IMR-90 (cell line): ENCODE measurements at regions of chr7 and their contacts with region 1.

Region 1: DNA sequence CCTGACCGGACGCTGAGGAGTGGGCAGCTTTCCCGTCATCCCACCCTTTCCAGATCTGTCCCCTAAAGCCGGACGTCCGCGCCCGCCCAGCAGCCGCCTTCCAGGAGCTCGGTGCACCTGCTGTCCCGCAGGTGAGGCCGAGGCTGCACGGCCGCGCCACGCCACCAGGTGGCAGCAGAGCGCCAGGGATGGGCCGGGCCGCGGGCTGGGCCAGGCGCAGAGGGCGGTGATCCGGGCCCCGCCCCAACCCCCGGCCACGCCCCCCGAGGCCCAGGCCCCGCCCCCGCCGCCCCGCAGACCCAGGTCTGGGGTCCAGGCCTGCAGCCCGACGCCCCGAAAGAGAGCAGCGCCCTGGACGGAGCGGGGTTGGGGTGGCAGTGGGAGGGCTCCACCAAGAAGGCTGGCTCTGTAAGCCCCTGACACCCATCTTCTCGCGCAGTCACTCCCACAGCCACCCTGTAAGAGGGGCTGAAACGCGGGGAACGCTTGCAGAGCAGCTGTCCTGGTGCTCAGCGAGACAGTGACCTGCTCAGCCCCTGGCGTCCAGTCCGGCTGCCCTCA is 32.2 kb downstream of the FOXL3 start:
- DNase-seq: peak; percentile 3
- ATAC-seq: peak; percentile 99
- H3K4me3 ChIP-seq: no peak overlapping the region
- H3K27ac ChIP-seq: no peak overlapping the region
- H3K4me1 ChIP-seq: no peaks in the 10 kb centered on the region
- H3K27me3 ChIP-seq: peaks cover 49% of the 10 kb centered on the region
- CTCF ChIP-seq: peak; percentile 77
- POLR2A ChIP-seq: 0 out of 2 replicates have a peak, but pooled peaks have one; percentile 25
- RAD21 ChIP-seq: peak; percentile 91

Region 2: DNA sequence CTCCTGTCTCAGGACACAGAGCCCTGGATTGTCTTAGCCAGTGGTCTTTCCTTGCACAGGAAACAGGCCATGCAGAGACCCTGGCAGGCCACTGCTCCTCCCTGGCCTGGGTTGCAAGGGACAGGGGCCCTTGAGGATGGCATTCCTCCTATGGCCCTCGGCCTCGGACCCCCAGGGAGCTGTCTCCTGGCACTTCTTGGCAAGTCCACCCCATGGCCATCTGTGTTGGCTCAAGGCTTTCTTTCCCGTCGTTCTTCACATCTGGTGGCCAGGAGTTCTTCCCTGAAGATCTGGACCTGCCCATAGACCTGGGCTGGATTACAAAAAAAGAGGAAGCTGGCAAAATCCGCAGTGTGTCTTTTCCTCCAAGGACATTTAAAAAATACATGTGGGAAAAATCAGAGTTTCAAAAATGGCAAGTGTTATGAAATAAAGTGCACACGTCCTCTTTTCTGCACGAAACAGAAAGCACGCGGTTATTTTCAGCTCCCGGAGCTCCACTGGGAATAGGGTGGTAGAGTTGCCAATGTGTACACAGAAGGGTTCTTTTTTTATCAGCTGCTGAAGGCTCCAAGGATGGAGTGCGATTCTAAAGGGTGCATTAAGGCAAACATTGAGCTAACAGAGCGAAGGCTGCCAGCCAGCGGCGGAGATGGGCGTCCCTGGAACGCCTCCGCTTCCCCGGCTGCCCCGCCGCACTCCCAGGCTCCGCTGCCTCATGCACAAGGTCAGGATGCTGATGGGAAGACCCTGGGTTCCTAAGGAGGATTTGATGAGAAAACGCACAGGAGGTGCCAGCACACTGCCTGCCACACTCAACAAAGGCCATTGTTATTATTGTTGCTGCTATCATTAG is 192.6 kb before region 1 on chr7:
- CTCF ChIA-PET with region 1: no interaction called
- POLR2A ChIA-PET with region 1: no interaction called
- dilution Hi-C with region 1: no loop called
- in situ Hi-C with region 1: no loop called
- intact Hi-C with region 1: no loop called
- DNase-seq: no peak
- ATAC-seq: no peak; the same call in 1 of the 2 replicates
- H3K4me3 ChIP-seq: no peak overlapping the region
- H3K27ac ChIP-seq: no peak overlapping the region
- H3K4me1 ChIP-seq: peaks cover 7% of the 10 kb centered on the region; the same call in 1 of the 2 replicates
- H3K27me3 ChIP-seq: peaks cover 9% of the 10 kb centered on the region
- CTCF ChIP-seq: no peak
- POLR2A ChIP-seq: no peak
- RAD21 ChIP-seq: no peak

Region 3: GRCh38 chr7:455110-455928 is 133.1 kb after region 1 on chr7:
- CTCF ChIA-PET with region 1: no interaction called
- POLR2A ChIA-PET with region 1: no interaction called
- dilution Hi-C with region 1: no loop called
- in situ Hi-C with region 1: no loop called
- intact Hi-C with region 1: no loop called
- DNase-seq: no peak
- ATAC-seq: no peak
- H3K4me3 ChIP-seq: no peak overlapping the region
- H3K27ac ChIP-seq: no peak overlapping the region
- H3K4me1 ChIP-seq: peaks cover 10% of the 10 kb centered on the region
- H3K27me3 ChIP-seq: peaks cover 22% of the 10 kb centered on the region
- CTCF ChIP-seq: no peak
- POLR2A ChIP-seq: no peak
- RAD21 ChIP-seq: no peak

Region 4: GRCh38 chr7:636396-636795 is 314.2 kb after region 1 on chr7:
- CTCF ChIA-PET with region 1: no interaction called
- POLR2A ChIA-PET with region 1: no interaction called
- dilution Hi-C with region 1: no loop called
- in situ Hi-C with region 1: no loop called
- intact Hi-C with region 1: loop called (anchors 2 kb)
- DNase-seq: no peak
- ATAC-seq: peak; percentile 64
- H3K4me3 ChIP-seq: no peak overlapping the region
- H3K27ac ChIP-seq: no peak overlapping the region
- H3K4me1 ChIP-seq: no peaks in the 10 kb centered on the region
- H3K27me3 ChIP-seq: no peaks in the 10 kb centered on the region
- CTCF ChIP-seq: peak; percentile 39
- POLR2A ChIP-seq: no peak
- RAD21 ChIP-seq: peak; percentile 65

Region 5: DNA sequence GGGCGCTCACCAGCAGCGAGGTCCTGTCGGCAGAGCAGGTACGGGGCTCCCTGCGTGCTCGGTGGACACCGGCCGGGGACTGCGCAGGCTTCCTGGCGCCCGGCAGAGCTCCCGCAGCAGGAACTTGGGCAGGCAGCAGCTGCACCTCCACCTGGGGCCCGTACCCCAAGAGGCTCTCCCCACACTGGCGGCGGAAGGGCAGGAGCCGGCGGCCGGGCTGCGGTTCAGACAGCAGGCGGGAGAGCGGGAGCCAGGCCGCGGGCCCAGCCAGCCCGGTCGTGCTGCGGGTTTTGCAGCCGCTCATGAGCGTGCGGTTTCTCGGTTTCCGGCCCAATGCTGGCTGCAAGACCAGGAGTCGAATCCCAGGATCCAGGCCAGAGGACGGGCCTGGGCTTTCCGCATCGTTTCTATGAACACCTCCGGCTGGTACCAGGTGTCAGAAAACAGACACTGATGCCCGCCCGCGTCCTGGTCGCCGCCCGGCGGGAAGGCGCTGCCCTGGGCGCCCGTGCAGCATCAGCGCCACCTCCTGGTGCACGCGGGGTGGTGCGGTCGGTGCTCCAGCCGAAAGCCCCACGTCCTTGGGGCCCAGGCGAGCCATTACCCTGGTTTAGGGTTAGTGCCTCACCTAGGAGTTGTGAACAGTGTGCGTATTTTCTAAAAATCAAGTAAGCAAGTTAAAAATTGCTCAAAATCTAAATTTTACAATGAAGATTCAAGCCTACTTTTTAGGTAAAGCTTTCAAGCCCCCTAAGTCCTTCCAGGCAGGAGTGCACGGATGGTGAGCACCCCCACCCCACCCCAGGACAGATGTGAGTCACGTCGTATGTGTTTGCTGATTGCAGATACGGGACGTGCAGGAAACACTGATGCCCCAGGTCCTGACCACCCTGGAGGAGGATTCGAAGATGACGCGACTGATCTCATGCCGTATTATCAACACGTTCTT is 452.2 kb after region 1 on chr7:
- CTCF ChIA-PET with region 1: no interaction called
- POLR2A ChIA-PET with region 1: no interaction called
- dilution Hi-C with region 1: no loop called
- in situ Hi-C with region 1: loop called (anchors 5 kb)
- intact Hi-C with region 1: loop called (anchors 1 kb)
- DNase-seq: peak; percentile 20
- ATAC-seq: peak; percentile 89
- H3K4me3 ChIP-seq: no peak overlapping the region
- H3K27ac ChIP-seq: no peak overlapping the region
- H3K4me1 ChIP-seq: peaks cover 10% of the 10 kb centered on the region
- H3K27me3 ChIP-seq: no peaks in the 10 kb centered on the region
- CTCF ChIP-seq: peak; percentile 95
- POLR2A ChIP-seq: peak; percentile 36; the same call in 1 of the 2 replicates
- RAD21 ChIP-seq: peak; percentile 95